Testis (tissue), 5 donors: ENCODE measurements at regions of chr9 and their contacts with region 1.

Region 1: GRCh38 chr9:133149126-133150107 is 14.3 kb downstream of the GBGT1 start:
- DNase-seq: peak; percentile 93
- H3K4me3 ChIP-seq: peak overlapping the region; percentile 62 to 63
- H3K27ac ChIP-seq: peak overlapping the region; percentile 81 to 84
- H3K4me1 ChIP-seq: peaks cover 20% of the 10 kb centered on the region
- H3K27me3 ChIP-seq: no peaks in the 10 kb centered on the region
- CTCF ChIP-seq: peak in 2 of 3 experiments; percentile 19 to 32
- POLR2A ChIP-seq: no peak

Region 2: DNA sequence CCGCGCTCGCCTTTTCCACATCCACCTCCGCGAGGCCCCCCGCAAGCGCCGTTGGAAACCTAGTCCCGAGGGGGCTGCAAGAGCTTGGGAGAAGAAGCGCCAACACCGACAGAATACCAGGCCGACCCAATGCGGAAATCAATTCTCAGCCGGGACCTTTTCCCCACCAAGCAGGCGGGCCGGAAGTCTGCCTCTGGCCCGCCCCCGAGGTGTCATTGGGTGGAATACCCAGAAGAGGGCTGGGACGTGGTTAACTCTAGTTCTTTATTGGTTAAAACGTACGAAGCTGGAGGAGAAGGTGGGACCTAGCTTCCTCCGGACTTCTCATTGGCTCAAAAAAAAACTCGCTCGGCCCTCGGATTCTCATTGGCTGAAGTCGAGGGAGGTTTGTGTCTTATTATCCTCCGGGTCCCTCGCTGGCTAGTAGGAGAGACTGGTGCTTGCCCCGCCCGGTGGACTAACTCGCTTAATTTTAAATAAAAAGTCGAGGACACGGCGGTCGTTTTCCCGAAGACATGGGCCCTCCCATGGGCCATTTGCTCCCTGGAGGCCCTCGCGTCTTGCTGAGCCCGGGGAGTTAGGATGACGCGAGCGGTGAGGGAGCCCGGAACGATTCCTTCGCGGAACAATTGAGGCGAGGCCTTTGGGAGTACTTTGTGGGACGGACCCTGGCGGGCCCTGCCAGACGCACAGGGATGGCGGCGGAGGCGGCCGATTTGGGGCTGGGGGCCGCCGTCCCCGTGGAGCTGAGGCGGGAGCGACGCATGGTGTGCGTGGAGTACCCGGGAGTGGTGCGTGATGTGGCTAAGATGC is 118.9 kb before region 1 on chr9 and contains the start of gene GTF3C5:
- intact Hi-C with region 1: loop called (anchors 10 kb)
- DNase-seq: peak; percentile 96
- H3K4me3 ChIP-seq: peak within 1 kb of the TSS; percentile 96 to 97
- H3K27ac ChIP-seq: peak within 1 kb of the TSS; percentile 93 to 94
- H3K4me1 ChIP-seq: peaks cover 21% of the 10 kb centered on the region
- H3K27me3 ChIP-seq: no peaks in the 10 kb centered on the region
- CTCF ChIP-seq: peak in 1 of 3 experiments; percentile 9
- POLR2A ChIP-seq: no peak
- total RNA-seq, gene GTF3C5: 109 to 117 TPM

Region 3: GRCh38 chr9:133375724-133376654 is 226.6 kb after region 1 on chr9 and contains the starts of genes STKLD1 and SURF4:
- intact Hi-C with region 1: no loop called
- DNase-seq: peak; percentile 98
- H3K4me3 ChIP-seq: peak within 1 kb of the TSS; percentile 86 to 98
- H3K27ac ChIP-seq: peak within 1 kb of the TSS; percentile 89 to 91
- H3K4me1 ChIP-seq: peaks cover 22% of the 10 kb centered on the region
- H3K27me3 ChIP-seq: no peaks in the 10 kb centered on the region
- CTCF ChIP-seq: peak in 1 of 3 experiments; percentile 23
- POLR2A ChIP-seq: peak; percentile 67
- total RNA-seq, gene STKLD1: 8.4 to 20.9 TPM
- total RNA-seq, gene SURF4: 150 to 151 TPM